ENCODE measurements at regions of chr16 and their contacts with region 1.

Region 1: DNA sequence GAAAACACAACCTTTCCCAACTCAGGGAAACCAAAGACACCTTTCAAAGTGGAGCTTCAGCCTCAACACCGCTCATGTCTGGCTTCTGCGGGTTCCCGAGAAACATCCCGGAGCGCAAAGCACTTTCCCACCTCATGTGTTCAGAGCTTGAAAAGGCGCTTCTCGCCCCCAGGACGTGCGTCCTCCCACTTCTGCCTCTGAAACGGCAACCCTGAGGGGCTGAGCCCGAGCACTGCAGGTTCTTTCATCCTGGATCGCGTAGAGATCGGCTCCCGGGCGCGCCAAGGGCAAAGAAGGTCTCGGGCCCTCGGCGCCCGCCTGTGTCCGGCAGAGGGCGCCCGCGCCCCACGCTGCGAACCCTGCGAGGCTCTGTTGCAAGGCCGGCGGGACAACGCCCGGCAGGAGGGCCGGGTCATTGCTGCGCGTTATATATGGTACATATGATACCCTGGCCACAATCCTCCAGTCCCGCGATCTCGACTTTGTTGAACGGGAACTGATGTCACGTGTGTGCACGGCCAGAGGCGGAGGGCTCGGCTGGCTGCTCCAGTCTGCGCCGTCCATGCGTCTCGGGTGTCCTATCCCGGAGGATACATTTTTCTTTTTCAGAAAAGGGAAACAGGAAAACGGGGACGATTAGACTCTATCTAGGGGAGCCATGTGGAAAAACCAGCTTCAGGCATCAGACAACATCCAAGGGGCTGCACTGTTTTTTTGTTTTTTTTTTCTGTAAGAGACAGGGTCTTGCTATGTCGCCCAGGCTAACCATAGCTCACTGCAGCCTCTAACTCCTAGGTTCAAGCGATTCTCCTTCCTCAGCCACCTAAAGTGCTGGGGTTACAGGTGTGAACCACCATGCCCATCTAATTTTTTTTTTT is 19.1 kb downstream of the COQ7 start:
- DNase-seq: peak; percentile 82
- ATAC-seq: peak; percentile 97
- H3K4me3 Mint-ChIP-seq: peak overlapping the region; percentile 63
- H3K27ac Mint-ChIP-seq: no peak overlapping the region
- H3K4me1 Mint-ChIP-seq: peaks cover 5% of the 10 kb centered on the region
- H3K27me3 Mint-ChIP-seq: peaks cover 2% of the 10 kb centered on the region
- CTCF ChIP-seq: peak; percentile 91

Region 2: DNA sequence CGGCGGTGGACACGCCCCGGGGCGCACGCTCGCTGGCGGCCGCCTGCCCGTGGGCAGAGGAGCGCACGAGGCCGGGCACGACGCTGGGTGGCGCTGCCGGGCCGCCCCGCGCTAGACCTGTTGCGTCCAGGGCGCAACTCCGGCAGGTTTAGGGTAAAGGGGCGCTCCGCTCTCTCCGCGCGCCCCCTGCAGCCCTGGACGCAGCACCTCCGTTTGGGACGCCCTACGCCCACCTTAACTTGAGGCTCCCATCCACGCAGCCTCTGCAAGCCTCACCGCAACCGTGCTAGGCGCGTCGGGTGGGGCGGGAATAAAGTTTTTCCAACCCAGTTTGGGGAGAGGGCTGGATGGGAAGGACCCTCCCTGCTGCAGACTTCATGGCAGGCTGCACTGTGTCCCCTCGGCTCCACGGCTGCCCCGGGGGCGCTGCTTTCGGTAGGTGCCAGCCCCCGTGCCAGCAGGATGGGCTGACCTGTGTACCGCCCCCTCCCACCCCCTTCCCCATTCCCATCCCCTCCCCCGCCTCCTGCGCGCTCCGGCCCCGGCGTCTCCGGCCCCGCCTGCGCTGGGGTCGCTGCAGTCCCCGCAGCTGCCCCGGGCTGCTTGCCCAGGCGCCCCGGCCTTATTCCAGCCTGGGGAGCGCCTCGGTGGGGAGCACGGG is 81.3 kb after region 1 on chr16 and contains the start of gene SYT17:
- CTCF ChIA-PET with region 1: interaction called, 4 read pairs
- POLR2A ChIA-PET with region 1: interaction called, 10 read pairs
- intact Hi-C with region 1: loop called (anchors 1 kb)
- DNase-seq: peak; percentile 69
- ATAC-seq: peak; percentile 92
- H3K4me3 Mint-ChIP-seq: peak within 1 kb of the TSS; percentile 82
- H3K27ac Mint-ChIP-seq: no peak within 1 kb of the TSS
- H3K4me1 Mint-ChIP-seq: peaks cover 24% of the 10 kb centered on the region
- H3K27me3 Mint-ChIP-seq: no peaks in the 10 kb centered on the region
- CTCF ChIP-seq: no peak
- total RNA-seq, gene SYT17: 21.2 and 25.4 TPM in 2 replicates

Region 3: DNA sequence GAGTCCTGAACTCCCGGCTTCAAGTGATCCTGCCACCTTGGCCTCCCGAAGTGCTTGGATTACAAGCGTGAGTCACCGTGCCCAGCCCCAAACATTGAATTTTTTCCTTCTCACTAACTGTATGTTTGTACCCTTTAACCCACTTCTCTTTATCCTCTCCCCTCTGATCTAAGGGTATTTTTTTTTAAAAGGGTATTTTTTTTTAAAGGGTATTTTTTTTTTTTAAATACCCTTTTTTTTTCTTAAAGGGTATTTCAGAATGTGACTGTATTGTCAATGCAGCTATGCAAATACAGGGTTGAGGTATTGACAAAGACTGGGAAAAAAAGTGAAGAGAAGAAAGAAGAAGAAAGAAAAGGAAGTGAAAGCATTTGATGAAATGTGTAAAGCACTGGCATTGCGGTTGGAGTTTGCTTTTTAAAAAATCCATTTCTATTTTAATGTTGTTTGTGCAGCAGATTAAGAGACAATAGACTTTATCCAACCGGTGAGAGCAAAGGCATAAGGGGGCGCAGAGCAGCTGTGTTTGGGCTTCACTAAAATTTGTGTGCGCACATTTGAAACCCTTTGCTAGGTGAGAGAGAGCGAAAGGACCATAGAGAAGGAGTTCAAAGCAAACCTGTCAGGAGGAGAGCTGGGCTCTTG is 123.8 kb after region 1 on chr16:
- CTCF ChIA-PET with region 1: interaction called, 3 read pairs
- POLR2A ChIA-PET with region 1: no interaction called
- intact Hi-C with region 1: loop called (anchors 5 kb)
- DNase-seq: no peak
- ATAC-seq: peak; percentile 69
- H3K4me3 Mint-ChIP-seq: peak overlapping the region; percentile 73
- H3K27ac Mint-ChIP-seq: peak overlapping the region; percentile 98
- H3K4me1 Mint-ChIP-seq: peaks cover 74% of the 10 kb centered on the region
- H3K27me3 Mint-ChIP-seq: no peaks in the 10 kb centered on the region
- CTCF ChIP-seq: no peak

Region 4: GRCh38 chr16:19375561-19376158 is 289.1 kb after region 1 on chr16:
- CTCF ChIA-PET with region 1: interaction called, 66 read pairs
- POLR2A ChIA-PET with region 1: no interaction called
- intact Hi-C with region 1: loop called (anchors 1 kb)
- DNase-seq: no peak
- ATAC-seq: peak; percentile 83
- H3K4me3 Mint-ChIP-seq: no peak overlapping the region
- H3K27ac Mint-ChIP-seq: no peak overlapping the region
- H3K4me1 Mint-ChIP-seq: no peaks in the 10 kb centered on the region
- H3K27me3 Mint-ChIP-seq: no peaks in the 10 kb centered on the region
- CTCF ChIP-seq: peak; percentile 97

Region 5: DNA sequence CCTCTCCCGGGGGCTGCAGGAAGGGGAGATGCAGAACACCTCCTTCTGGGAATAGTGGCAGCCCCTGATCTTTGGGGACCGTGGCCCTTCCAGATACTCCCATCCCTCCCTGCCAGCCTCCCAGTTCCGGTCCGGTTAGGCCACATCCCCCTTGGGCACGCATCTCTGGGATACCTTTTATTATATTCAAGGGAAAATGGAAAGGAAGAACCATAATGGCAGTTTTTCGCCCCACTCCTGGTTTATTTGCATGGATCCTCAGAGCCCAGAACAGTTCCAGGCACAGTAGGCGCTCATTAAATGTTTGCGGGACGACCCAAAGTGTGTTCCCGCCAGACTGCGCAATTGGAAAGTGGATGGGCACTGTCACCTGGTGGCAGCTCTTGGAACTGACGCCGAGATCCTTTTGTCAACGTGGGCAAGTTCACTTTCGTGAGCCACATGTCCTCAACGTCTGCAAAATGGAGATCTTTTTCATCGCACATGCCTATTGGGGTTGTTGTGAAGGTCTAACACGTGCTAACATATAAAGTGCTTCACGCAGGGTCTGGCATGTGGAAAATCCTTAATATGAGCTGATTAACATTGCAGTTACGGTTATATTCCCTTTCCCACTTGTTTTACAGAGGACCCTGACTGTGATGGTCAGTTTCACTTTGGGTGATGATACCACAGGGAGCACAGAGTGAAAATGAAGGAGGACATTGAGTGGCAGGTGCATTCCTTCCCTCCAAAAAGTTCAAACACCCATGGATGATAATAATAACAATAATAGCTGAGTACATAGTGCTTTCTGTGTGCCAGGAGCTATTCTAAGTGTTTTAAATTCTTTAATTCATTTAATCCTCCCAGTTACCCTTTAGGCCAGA is 799.7 kb after region 1 on chr16:
- CTCF ChIA-PET with region 1: no interaction called
- POLR2A ChIA-PET with region 1: no interaction called
- intact Hi-C with region 1: loop called (anchors 1 kb)
- DNase-seq: peak; percentile 58
- ATAC-seq: peak; percentile 74
- H3K4me3 Mint-ChIP-seq: peak overlapping the region; percentile 82
- H3K27ac Mint-ChIP-seq: no peak overlapping the region
- H3K4me1 Mint-ChIP-seq: peaks cover 31% of the 10 kb centered on the region
- H3K27me3 Mint-ChIP-seq: peaks cover 35% of the 10 kb centered on the region
- CTCF ChIP-seq: peak; percentile 72

Measured in activated B cell treated with CpG ODN at 0.5 μM for 24 hours (primary cell).